Activated CD8-positive, alpha-beta T cell treated with anti-CD3 and anti-CD28 coated beads, Interleukin-2, amount 10 ng/mL, durations not matched to agents 7 days and 5 days (primary cell): ENCODE measurements at regions of chr10 and their contacts with region 1.

Region 1: DNA sequence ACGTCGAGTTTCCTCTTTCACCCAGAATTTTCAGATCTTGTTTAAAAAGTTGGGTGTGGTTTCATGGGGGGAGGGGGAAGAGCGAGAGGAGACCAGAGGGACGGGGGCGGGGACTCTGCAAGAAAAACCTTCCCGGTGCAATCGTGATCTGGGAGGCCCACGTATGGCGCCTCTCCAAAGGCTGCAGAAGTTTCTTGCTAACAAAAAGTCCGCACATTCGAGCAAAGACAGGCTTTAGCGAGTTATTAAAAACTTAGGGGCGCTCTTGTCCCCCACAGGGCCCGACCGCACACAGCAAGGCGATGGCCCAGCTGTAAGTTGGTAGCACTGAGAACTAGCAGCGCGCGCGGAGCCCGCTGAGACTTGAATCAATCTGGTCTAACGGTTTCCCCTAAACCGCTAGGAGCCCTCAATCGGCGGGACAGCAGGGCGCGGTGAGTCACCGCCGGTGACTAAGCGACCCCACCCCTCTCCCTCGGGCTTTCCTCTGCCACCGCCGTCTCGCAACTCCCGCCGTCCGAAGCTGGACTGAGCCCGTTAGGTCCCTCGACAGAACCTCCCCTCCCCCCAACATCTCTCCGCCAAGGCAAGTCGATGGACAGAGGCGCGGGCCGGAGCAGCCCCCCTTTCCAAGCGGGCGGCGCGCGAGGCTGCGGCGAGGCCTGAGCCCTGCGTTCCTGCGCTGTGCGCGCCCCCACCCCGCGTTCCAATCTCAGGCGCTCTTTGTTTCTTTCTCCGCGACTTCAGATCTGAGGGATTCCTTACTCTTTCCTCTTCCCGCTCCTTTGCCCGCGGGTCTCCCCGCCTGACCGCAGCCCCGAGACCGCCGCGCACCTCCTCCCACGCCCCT is at the start of gene VIM:
- DNase-seq: peak; percentile 94
- ATAC-seq: peak; percentile 43
- H3K4me3 Mint-ChIP-seq: peak within 1 kb of the TSS; percentile 91
- H3K27ac Mint-ChIP-seq: peak within 1 kb of the TSS; percentile 96
- H3K4me1 Mint-ChIP-seq: peaks cover 49% of the 10 kb centered on the region
- H3K27me3 Mint-ChIP-seq: no peaks in the 10 kb centered on the region
- total RNA-seq, gene VIM: 2,550 to 2,568 TPM

Region 2: DNA sequence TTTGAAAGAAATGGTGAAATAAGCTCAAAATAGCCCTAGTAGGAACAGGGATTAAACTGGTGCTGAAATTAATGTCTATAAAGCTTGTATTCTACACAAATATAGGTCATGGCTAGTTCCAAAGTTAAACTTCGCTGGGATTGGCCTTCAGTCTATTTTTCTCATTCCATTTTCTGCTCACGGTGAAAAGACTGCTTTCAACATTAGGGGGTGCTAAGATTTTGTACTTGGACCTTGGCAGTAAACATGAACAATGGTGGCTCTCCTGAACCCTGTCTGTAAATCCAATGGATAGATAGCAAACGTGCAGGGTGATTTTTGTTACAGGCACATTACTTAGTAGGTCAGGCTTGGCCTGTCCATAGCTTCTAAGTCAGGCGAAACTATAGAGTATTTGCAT is 375.1 kb before region 1 on chr10:
- CTCF ChIA-PET with region 1: interaction called, 10 read pairs
- POLR2A ChIA-PET with region 1: interaction called, 3 read pairs
- DNase-seq: no peak
- ATAC-seq: peak; percentile 63
- H3K4me3 Mint-ChIP-seq: no peak overlapping the region
- H3K27ac Mint-ChIP-seq: no peak overlapping the region
- H3K4me1 Mint-ChIP-seq: no peaks in the 10 kb centered on the region
- H3K27me3 Mint-ChIP-seq: peaks cover 2% of the 10 kb centered on the region

Region 3: DNA sequence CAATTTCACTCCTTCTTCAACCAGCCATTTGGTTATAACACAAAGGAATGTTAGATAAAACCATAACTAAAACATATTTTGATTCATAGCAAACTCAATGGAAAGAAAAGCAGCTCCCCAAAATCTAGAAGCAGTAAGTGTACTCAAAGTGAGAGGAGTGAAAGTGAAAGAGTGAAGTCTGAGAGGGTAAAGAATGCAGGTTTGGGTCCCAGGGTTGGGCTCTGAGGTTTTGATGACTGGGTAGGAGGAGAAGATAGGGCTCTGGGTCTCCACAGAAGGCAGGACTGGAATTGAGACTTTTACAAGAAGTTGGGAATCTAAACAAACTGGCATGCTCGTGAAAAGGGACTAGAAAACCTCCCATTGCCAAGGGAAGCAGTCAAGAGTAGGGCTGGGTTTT is 325.7 kb before region 1 on chr10:
- CTCF ChIA-PET with region 1: no interaction called
- POLR2A ChIA-PET with region 1: interaction called, 10 read pairs
- DNase-seq: peak; percentile 63
- ATAC-seq: peak; percentile 97
- H3K4me3 Mint-ChIP-seq: peak overlapping the region; percentile 51
- H3K27ac Mint-ChIP-seq: peak overlapping the region; percentile 64
- H3K4me1 Mint-ChIP-seq: peaks cover 17% of the 10 kb centered on the region
- H3K27me3 Mint-ChIP-seq: no peaks in the 10 kb centered on the region

Region 4: DNA sequence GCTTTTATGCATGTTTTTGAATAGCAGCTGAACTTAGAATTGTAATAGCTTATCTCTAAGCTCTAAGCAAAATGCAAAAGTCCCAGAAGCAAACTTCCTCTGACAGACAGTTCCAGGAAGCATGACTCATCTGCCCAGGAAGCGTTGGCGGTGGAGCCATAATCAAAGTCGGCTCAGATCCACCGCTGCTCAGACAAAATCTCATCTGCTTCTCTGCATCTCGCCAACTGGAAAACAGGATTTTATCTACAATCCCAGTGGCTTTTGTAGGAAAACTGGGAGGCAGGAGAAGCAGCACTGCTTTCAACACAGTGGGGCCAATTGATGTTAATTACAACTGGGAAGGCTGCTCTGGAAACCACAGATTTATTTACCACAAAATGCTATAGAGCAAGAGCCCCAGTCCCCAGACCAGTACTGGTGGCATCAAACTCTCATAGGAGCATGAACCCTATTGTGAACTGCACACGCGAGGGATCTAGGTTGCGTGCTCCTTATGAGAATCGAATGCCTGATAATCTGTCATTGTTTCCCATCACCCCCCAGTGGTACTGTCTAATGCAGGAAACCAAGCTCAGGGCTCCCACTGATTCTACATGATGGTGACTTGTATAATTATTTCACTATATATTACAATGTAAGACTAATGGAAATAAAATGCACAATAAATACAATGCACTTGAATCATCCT is 198.6 kb before region 1 on chr10:
- CTCF ChIA-PET with region 1: interaction called, 19 read pairs
- POLR2A ChIA-PET with region 1: interaction called, 127 read pairs
- DNase-seq: peak; percentile 82
- ATAC-seq: peak; percentile 52
- H3K4me3 Mint-ChIP-seq: peak overlapping the region; percentile 71
- H3K27ac Mint-ChIP-seq: peak overlapping the region; percentile 94
- H3K4me1 Mint-ChIP-seq: peaks cover 90% of the 10 kb centered on the region
- H3K27me3 Mint-ChIP-seq: no peaks in the 10 kb centered on the region

Region 5: GRCh38 chr10:17206210-17206709 is 22.1 kb before region 1 on chr10:
- CTCF ChIA-PET with region 1: interaction called, 38 read pairs
- POLR2A ChIA-PET with region 1: interaction called, 150 read pairs
- DNase-seq: peak; percentile 63
- ATAC-seq: peak; percentile 65
- H3K4me3 Mint-ChIP-seq: no peak overlapping the region
- H3K27ac Mint-ChIP-seq: peak overlapping the region; percentile 84
- H3K4me1 Mint-ChIP-seq: peaks cover 63% of the 10 kb centered on the region
- H3K27me3 Mint-ChIP-seq: no peaks in the 10 kb centered on the region

Region 6: DNA sequence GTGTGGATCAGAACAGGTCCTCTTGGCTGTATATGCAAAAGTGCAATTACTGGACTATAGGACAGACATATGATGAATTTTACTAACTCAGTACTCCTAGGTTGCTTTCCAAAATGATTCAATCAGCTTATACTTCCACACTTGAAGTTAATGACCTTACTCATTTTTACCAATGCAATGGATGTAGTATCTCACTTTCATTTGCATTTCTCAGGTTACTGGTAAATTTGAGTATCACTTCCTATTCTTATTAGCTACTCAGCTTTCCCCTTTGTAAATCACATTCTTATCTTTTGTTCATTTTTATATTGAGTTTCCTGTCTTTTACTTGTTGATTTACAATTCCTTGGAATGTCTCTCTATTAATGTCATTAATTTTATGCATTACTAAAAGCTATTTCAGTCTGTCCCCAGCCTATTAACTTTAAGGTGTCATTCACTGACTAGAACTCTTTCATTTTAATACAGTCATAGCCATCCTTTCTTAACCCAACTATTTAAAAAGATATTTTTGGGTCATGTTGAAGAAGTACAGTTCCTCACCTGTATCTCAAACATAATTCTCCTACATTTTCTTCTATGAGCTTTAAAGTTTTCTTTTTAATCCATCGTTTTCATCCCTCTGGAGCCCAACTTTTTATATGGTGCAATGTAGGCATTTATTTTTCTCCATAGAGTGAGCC is 88.3 kb after region 1 on chr10:
- CTCF ChIA-PET with region 1: no interaction called
- POLR2A ChIA-PET with region 1: no interaction called
- DNase-seq: no peak
- ATAC-seq: no peak
- H3K4me3 Mint-ChIP-seq: no peak overlapping the region
- H3K27ac Mint-ChIP-seq: no peak overlapping the region
- H3K4me1 Mint-ChIP-seq: no peaks in the 10 kb centered on the region
- H3K27me3 Mint-ChIP-seq: peaks cover 18% of the 10 kb centered on the region

Region 7: DNA sequence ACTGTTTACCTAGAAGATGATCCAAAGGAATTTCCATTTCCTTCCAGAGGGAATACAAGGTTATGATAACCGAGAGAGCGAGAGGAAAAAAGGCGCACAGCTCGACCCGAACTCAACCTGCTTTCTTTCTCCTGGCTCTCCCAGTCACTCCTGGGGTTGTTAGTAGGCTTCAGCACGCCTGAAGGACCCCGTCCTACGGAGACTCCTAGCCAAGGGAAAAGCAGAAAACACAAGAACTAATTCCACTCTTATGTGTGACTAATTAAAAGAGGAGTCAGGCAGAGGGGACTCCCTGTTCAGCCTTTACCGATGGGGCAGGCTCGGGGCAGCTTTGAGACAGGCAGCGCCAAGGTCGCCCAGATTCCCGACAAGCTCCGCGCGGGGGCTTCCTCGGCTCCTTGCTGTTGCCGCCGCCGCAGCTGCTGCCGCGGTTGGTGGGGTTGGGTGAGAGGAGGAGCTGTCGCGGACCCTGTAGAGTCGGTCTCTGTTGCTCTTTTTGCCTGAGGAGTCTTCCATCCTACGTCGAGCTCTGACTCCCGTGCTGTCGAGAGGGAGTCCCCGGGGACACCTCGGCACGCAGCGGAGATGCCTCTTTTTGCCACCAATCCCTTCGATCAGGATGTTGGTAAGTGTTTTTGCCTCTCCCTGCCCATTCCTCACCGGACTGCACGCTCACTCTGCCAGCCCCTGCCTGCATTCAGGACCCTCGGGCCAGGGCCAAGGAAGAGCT is 415.6 kb after region 1 on chr10 and contains the start of gene STAM:
- CTCF ChIA-PET with region 1: no interaction called
- POLR2A ChIA-PET with region 1: interaction called, 12 read pairs
- DNase-seq: peak; percentile 95
- ATAC-seq: peak; percentile 86
- H3K4me3 Mint-ChIP-seq: peak within 1 kb of the TSS; percentile 95
- H3K27ac Mint-ChIP-seq: peak within 1 kb of the TSS; percentile 100
- H3K4me1 Mint-ChIP-seq: peaks cover 54% of the 10 kb centered on the region
- H3K27me3 Mint-ChIP-seq: no peaks in the 10 kb centered on the region
- total RNA-seq, gene STAM: 20.8 to 21.9 TPM